ENCODE measurements at regions of chrX and their contacts with region 1.

Region 1: GRCh38 chrX:139559383-139560042 is 29.0 kb downstream of the F9 start:
- DNase-seq: peak in 1 of 2 experiments; percentile 43
- H3K4me3 ChIP-seq: no peak overlapping the region
- H3K4me3 Mint-ChIP-seq: no peak overlapping the region
- H3K27ac Mint-ChIP-seq: no peak overlapping the region
- H3K4me1 ChIP-seq: no peaks in the 10 kb centered on the region
- H3K4me1 Mint-ChIP-seq: no peaks in the 10 kb centered on the region
- H3K27me3 ChIP-seq: no peaks in the 10 kb centered on the region
- H3K27me3 Mint-ChIP-seq: no peaks in the 10 kb centered on the region
- CTCF ChIP-seq: peak; percentile 36 to 57

Region 2: DNA sequence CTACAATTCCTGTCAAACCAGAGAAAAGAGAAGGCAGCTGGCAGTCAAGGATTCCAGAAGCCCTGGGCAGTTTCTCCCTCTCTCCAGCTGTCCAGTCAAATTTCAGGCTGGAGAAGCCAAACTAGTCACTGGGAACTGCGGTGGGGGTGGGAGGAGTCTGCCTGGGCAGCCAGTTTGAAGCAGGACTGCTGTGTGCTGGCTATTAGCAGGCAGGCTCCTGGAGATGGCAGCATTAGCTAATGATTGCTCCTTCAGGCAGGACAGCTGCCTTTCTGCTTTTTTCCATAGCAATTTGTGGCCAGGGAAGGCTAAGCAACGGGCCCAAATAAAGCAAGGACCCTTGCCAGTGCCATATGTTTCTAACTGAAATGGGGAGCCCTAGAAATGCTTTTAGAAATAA is 803.3 kb before region 1 on chrX:
- CTCF ChIA-PET with region 1: no interaction called
- POLR2A ChIA-PET with region 1: no interaction called
- intact Hi-C with region 1: loop called (anchors 5 kb)
- DNase-seq: peak; percentile 34 to 42
- H3K4me3 ChIP-seq: no peak overlapping the region
- H3K4me3 Mint-ChIP-seq: no peak overlapping the region
- H3K27ac Mint-ChIP-seq: no peak overlapping the region
- H3K4me1 ChIP-seq: no peaks in the 10 kb centered on the region
- H3K4me1 Mint-ChIP-seq: no peaks in the 10 kb centered on the region
- H3K27me3 ChIP-seq: no peaks in the 10 kb centered on the region
- H3K27me3 Mint-ChIP-seq: no peaks in the 10 kb centered on the region
- CTCF ChIP-seq: peak in 1 of 2 experiments; percentile 29

Region 3: GRCh38 chrX:138775517-138775916 is 784.0 kb before region 1 on chrX:
- CTCF ChIA-PET with region 1: interaction called, 3 read pairs
- POLR2A ChIA-PET with region 1: no interaction called
- intact Hi-C with region 1: loop called (anchors 1 kb)
- DNase-seq: peak in 1 of 2 experiments; percentile 1
- H3K4me3 ChIP-seq: no peak overlapping the region
- H3K4me3 Mint-ChIP-seq: no peak overlapping the region
- H3K27ac Mint-ChIP-seq: no peak overlapping the region
- H3K4me1 ChIP-seq: no peaks in the 10 kb centered on the region
- H3K4me1 Mint-ChIP-seq: no peaks in the 10 kb centered on the region
- H3K27me3 ChIP-seq: no peaks in the 10 kb centered on the region
- H3K27me3 Mint-ChIP-seq: no peaks in the 10 kb centered on the region
- CTCF ChIP-seq: peak in 1 of 2 experiments; percentile 32

Region 4: GRCh38 chrX:138847928-138848327 is 711.6 kb before region 1 on chrX:
- CTCF ChIA-PET with region 1: no interaction called
- POLR2A ChIA-PET with region 1: no interaction called
- intact Hi-C with region 1: loop called (anchors 1 kb)
- DNase-seq: peak in 1 of 2 experiments; percentile 4
- H3K4me3 ChIP-seq: no peak overlapping the region
- H3K4me3 Mint-ChIP-seq: no peak overlapping the region
- H3K27ac Mint-ChIP-seq: no peak overlapping the region
- H3K4me1 ChIP-seq: no peaks in the 10 kb centered on the region
- H3K4me1 Mint-ChIP-seq: no peaks in the 10 kb centered on the region
- H3K27me3 ChIP-seq: no peaks in the 10 kb centered on the region
- H3K27me3 Mint-ChIP-seq: no peaks in the 10 kb centered on the region
- CTCF ChIP-seq: peak in 1 of 2 experiments; percentile 15

Region 5: GRCh38 chrX:139475432-139475831 is 84.1 kb before region 1 on chrX:
- CTCF ChIA-PET with region 1: no interaction called
- POLR2A ChIA-PET with region 1: no interaction called
- intact Hi-C with region 1: loop called (anchors 1 kb)
- DNase-seq: no peak
- H3K4me3 ChIP-seq: no peak overlapping the region
- H3K4me3 Mint-ChIP-seq: no peak overlapping the region
- H3K27ac Mint-ChIP-seq: no peak overlapping the region
- H3K4me1 ChIP-seq: no peaks in the 10 kb centered on the region
- H3K4me1 Mint-ChIP-seq: no peaks in the 10 kb centered on the region
- H3K27me3 ChIP-seq: no peaks in the 10 kb centered on the region
- H3K27me3 Mint-ChIP-seq: peaks cover 2% of the 10 kb centered on the region
- CTCF ChIP-seq: peak in 1 of 2 experiments; percentile 5

Region 6: DNA sequence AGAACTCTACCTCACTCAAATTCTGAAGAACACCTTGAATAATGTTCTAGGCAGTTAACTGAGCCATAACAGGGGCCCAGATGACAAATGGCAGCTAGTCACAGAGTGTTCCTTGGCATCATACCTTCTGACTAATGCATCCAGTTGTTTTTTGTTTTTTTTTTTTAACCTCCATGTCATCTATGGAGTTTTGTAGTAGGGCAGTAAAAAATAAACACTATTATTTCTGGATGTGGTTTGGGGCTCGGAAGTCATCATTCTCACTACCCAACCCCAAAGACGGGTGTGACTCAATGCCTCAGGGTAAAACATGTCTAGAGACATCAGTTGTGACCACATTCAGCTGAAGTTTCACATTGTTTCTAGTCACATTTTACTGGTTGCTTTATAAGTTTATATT is 179.6 kb after region 1 on chrX:
- CTCF ChIA-PET with region 1: no interaction called
- POLR2A ChIA-PET with region 1: no interaction called
- intact Hi-C with region 1: no loop called
- DNase-seq: no peak
- H3K4me3 ChIP-seq: no peak overlapping the region
- H3K4me3 Mint-ChIP-seq: no peak overlapping the region
- H3K27ac Mint-ChIP-seq: no peak overlapping the region
- H3K4me1 ChIP-seq: no peaks in the 10 kb centered on the region
- H3K4me1 Mint-ChIP-seq: no peaks in the 10 kb centered on the region
- H3K27me3 ChIP-seq: no peaks in the 10 kb centered on the region
- H3K27me3 Mint-ChIP-seq: no peaks in the 10 kb centered on the region
- CTCF ChIP-seq: no peak